IMR-90 (cell line): ENCODE measurements at regions of chrX and their contacts with region 1.

Region 1: GRCh38 chrX:154534862-154535670 is 11.6 kb downstream of the G6PD start:
- DNase-seq: peak; percentile 79
- ATAC-seq: peak; percentile 83
- H3K4me3 ChIP-seq: no peak overlapping the region
- H3K27ac ChIP-seq: no peak overlapping the region
- H3K4me1 ChIP-seq: peaks cover 2% of the 10 kb centered on the region; the same call in 1 of the 2 replicates
- H3K27me3 ChIP-seq: no peaks in the 10 kb centered on the region
- CTCF ChIP-seq: peak; percentile 100
- POLR2A ChIP-seq: peak; percentile 54; the same call in 1 of the 2 replicates
- RAD21 ChIP-seq: peak; percentile 99

Region 2: DNA sequence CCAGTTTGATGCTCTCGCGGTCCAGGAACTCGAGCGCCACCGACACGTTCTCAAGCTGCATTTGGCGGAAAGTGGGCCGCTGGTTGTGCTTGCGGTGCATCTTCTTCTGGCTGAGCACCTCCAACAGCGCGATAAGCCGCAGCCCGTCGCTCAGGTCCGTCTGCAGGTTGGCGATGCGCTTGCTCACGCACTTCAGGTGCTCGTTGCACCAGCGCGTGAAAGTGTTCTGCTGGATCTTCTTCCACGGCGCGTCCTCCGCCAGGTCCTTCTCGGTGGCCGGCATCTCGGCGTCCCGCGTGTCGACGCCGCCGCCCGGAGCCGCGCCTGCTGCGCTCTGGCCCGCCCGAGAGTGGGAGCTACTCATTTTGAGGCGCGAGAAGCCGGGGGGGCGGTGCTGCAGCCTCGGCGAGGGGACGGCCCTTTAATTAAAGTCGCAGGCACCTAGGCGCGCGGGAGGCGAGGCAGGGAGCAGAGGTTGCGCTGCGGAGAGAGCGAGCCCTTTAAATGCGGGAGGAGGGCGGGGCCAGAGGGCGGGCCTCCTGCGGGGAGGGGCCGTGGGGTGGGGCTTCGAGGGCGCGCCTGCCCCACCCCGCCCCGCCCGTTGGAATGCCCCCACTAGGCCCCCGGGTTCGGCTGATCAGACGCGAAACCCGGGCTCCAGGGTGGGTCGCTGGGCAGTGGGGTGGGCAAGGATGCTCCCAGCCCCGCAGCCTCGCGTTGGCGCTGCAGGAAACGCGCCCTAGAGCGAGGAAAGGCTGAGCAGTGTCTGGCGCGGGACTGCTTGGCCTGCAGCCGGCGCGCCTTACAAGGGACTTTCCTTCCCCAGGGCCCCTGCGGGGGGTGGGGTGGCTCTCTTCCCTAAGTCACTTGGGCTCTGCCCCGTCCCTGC is 163.9 kb before region 1 on chrX:
- CTCF ChIA-PET with region 1: no interaction called
- POLR2A ChIA-PET with region 1: no interaction called
- dilution Hi-C with region 1: no loop called
- in situ Hi-C with region 1: no loop called
- intact Hi-C with region 1: loop called (anchors 5 kb)
- DNase-seq: peak; percentile 89
- ATAC-seq: peak; percentile 42
- H3K4me3 ChIP-seq: peak overlapping the region; percentile 95
- H3K27ac ChIP-seq: peak overlapping the region; percentile 99
- H3K4me1 ChIP-seq: peaks cover 9% of the 10 kb centered on the region
- H3K27me3 ChIP-seq: no peaks in the 10 kb centered on the region
- CTCF ChIP-seq: no peak
- POLR2A ChIP-seq: peak; percentile 98
- RAD21 ChIP-seq: no peak

Region 3: GRCh38 chrX:154411322-154411980 is 123.6 kb before region 1 on chrX and contains the start of gene TAFAZZIN:
- CTCF ChIA-PET with region 1: no interaction called
- POLR2A ChIA-PET with region 1: no interaction called
- dilution Hi-C with region 1: no loop called
- in situ Hi-C with region 1: no loop called
- intact Hi-C with region 1: loop called (anchors 5 kb)
- DNase-seq: peak; percentile 52
- ATAC-seq: peak; percentile 73
- H3K4me3 ChIP-seq: peak within 1 kb of the TSS; percentile 94
- H3K27ac ChIP-seq: peak within 1 kb of the TSS; percentile 87
- H3K4me1 ChIP-seq: peaks cover 4% of the 10 kb centered on the region
- H3K27me3 ChIP-seq: no peaks in the 10 kb centered on the region
- CTCF ChIP-seq: no peak
- POLR2A ChIP-seq: no peak
- RAD21 ChIP-seq: no peak
- total RNA-seq, gene TAFAZZIN: 4.4 and 4.8 TPM in 2 replicates

Region 4: GRCh38 chrX:155563099-155563498 is 1028.0 kb after region 1 on chrX:
- CTCF ChIA-PET with region 1: no interaction called
- POLR2A ChIA-PET with region 1: no interaction called
- dilution Hi-C with region 1: no loop called
- in situ Hi-C with region 1: no loop called
- intact Hi-C with region 1: no loop called
- DNase-seq: no peak
- ATAC-seq: no peak
- H3K4me3 ChIP-seq: no peak overlapping the region
- H3K27ac ChIP-seq: no peak overlapping the region
- H3K4me1 ChIP-seq: no peaks in the 10 kb centered on the region
- H3K27me3 ChIP-seq: no peaks in the 10 kb centered on the region
- CTCF ChIP-seq: no peak
- POLR2A ChIP-seq: no peak
- RAD21 ChIP-seq: no peak